ENCODE measurements at regions of chr4 and their contacts with region 1.

Region 1: DNA sequence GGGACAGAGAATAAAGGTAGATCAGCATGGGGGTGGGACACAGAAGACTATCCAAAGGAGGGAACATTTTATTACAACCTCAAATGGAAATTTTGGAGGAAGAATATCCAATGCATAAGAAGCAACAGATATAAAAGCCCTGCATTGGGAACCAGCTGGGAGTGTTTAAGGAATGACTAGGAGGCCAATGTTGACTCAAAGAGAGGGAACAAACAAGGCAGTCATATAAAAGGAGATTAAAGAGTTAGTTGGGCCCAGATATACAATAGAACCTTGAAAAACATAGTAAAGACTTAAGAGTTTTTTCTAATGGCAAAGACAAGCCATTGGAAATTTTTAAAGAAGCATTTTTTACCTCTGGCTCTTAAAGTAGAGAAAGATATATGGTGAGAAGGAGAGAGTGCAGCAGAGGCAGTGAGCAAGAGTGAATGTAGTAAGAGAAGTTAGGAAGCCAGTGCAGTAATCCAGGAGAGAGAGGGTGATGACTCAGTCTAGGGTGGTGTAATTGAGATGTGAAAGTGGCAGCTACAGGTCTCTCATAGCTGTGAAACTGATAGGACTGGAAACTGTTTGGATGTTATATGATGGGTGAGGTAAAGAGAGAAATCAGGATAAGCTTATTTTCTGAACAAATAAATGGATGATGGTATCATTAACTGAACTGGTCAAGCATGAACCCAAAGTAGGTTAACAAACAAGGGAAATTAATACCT is 182.2 kb upstream of the ATOH1 start:
- DNase-seq: no peak
- H3K4me3 ChIP-seq: no peak overlapping the region
- CTCF ChIP-seq: no peak

Region 2: GRCh38 chr4:93263166-93263565 is 383.2 kb before region 1 on chr4:
- in situ Hi-C with region 1: no loop called
- DNase-seq: no peak
- H3K4me3 ChIP-seq: no peak overlapping the region
- CTCF ChIP-seq: no peak

Region 3: DNA sequence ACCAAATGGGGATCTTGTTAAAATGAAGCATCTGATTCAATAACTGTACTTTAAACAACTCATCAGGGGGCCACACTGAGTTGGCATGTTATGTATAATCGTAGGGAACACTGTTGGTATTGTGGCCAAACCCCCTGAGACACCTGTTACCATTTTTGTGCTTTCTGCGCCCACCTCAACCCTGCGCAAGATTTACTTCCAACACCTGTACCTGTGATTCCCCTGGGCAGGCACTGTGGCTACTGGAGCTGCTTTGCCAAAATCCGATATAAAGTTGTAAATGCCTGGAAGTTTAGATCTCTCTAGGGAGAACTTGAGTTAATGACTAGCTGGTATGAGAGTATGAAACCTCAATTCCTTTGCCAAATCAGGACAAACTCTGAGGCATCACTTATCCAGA is 77.6 kb before region 1 on chr4:
- in situ Hi-C with region 1: loop called (anchors 5 kb)
- DNase-seq: no peak
- H3K4me3 ChIP-seq: no peak overlapping the region
- CTCF ChIP-seq: no peak